PC-3 (cell line): ENCODE measurements at regions of chr3 and their contacts with region 1.

Region 1: GRCh38 chr3:18988614-18989229 is 159.6 kb upstream of the KCNH8 start:
- DNase-seq: peak; percentile 81
- ATAC-seq: peak; percentile 76
- H3K4me3 ChIP-seq: peak overlapping the region; percentile 32
- H3K27ac ChIP-seq: peak overlapping the region; percentile 27
- H3K4me1 ChIP-seq: peaks cover 13% of the 10 kb centered on the region
- H3K27me3 ChIP-seq: no peaks in the 10 kb centered on the region
- CTCF ChIP-seq: peak; percentile 94

Region 2: DNA sequence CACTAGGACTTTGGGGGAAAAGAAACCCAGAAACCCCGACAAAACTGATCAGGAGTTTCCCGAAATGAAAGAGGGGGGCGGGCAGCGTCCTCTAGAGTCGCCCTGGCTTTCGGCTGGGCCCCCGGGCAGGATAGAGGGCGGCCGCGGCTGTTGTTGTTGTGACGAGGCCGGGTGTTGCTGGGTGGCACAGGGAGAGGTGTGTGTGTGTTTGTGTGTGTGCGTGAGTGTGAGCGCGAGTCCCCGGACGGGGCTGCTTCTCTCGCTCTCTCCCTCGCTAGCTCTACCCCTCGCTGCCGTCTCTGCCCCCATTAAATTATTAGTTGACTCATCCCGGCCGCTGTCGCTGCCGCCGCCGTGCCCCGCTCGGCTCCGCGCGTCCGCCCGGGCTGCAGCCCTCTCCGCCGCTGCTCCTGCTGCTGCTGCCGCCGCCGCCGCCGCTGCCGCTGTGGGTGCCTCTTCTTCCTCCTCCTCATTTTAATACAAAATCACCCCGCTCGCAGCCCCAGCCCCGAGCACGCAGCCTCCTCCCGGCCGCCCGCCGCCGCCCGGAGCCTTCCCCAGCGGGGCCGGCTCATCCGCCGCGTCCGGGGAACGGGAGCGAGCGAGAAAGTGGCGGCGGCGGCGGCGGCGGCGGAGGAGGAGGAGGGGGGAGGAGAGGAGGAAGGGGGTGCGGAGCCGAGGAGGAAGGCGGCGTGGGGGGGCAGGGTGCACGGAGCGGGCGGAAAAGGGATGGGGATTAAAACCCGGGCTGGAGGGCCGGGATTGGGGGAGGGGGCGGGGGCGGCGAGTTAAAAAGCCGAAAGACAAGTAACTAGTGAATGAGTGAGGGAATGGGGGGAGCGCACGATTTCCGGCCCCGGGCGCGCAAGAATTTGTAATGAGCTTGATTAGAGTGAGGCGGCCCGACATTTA is 563.7 kb before region 1 on chr3 and contains the start of gene SATB1:
- CTCF ChIA-PET with region 1: no interaction called
- POLR2A ChIA-PET with region 1: no interaction called
- intact Hi-C with region 1: loop called (anchors 1 kb)
- DNase-seq: peak; percentile 48
- ATAC-seq: peak; percentile 57
- H3K4me3 ChIP-seq: peak within 1 kb of the TSS; percentile 85
- H3K27ac ChIP-seq: no peak within 1 kb of the TSS
- H3K4me1 ChIP-seq: peaks cover 13% of the 10 kb centered on the region; the same call in 1 of the 2 replicates
- H3K27me3 ChIP-seq: no peaks in the 10 kb centered on the region
- CTCF ChIP-seq: no peak
- total RNA-seq, gene SATB1: 15.6 and 28.6 TPM in 2 replicates

Region 3: DNA sequence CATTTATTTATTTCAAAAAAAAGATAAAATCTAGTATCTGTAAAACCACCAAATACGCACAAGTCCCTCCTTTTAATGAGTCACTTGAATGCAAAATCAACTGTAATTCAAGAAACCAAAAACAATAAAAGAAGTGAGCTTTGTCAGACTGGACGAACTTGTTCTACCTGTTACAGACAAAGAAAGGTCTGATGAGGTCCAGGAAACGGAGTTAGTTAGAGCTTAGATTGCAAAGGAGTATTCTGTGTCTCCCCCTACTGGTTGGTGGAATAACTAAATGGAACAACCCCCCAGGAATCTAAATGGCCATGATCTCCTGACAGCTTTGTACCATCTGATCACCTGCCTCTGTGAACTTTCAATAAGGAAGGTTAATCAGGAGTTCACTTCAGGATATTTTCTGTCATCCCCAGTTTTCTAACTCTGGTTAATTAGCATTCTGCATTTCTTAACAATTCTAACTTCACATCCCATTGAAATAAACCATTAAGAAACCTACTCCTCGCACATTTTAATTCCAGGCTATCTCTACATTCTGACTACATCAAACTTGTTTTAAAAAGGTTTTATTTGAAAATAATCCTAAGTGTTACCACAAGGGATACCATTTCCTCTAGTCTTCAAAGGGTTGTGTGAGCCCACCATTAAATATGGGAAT is 230.5 kb before region 1 on chr3:
- CTCF ChIA-PET with region 1: no interaction called
- POLR2A ChIA-PET with region 1: no interaction called
- intact Hi-C with region 1: loop called (anchors 1 kb)
- DNase-seq: peak; percentile 99
- ATAC-seq: peak; percentile 95
- H3K4me3 ChIP-seq: no peak overlapping the region
- H3K27ac ChIP-seq: peak overlapping the region; percentile 84
- H3K4me1 ChIP-seq: peaks cover 14% of the 10 kb centered on the region
- H3K27me3 ChIP-seq: no peaks in the 10 kb centered on the region
- CTCF ChIP-seq: peak; percentile 92

Region 4: DNA sequence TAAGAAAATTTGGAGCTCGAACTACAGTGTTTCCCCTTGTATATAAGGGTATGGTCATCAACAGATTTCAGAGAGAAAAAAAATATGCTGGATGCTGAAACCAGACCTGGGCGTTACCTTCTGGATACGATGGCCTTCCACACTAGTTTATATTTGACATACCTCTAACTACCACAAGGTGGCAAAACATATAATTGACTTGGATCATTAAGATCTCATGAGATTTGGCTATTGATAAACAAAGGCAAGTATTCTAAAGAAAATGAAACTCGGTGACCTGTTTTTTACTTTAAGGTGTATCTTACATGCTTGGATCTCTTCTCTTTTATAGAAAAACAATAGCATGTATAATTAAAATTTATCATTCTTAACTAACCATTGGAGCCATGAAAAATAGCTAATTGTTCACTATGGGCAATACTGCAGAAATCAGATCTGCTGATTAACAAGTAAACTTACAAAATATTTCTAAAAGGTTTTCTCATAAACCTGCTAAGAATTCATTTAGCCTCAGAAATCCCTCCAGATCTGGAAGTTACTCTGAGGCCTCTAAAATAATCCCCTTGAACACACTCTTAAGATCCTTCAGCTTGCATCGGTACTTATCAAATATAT is 141.0 kb before region 1 on chr3:
- CTCF ChIA-PET with region 1: interaction called, 6 read pairs
- POLR2A ChIA-PET with region 1: no interaction called
- intact Hi-C with region 1: loop called (anchors 1 kb)
- DNase-seq: peak; percentile 62
- ATAC-seq: peak; percentile 53; the same call in 1 of the 2 replicates
- H3K4me3 ChIP-seq: no peak overlapping the region
- H3K27ac ChIP-seq: no peak overlapping the region
- H3K4me1 ChIP-seq: no peaks in the 10 kb centered on the region
- H3K27me3 ChIP-seq: no peaks in the 10 kb centered on the region
- CTCF ChIP-seq: peak; percentile 75